ENCODE measurements at regions of chr19 and their contacts with region 1.

Region 1: GRCh38 chr19:38402967-38403861 is at the start of gene FAM98C:
- DNase-seq: peak; percentile 99
- H3K4me3 ChIP-seq: peak within 1 kb of the TSS; percentile 83
- H3K27ac ChIP-seq: peak within 1 kb of the TSS; percentile 29
- H3K4me1 ChIP-seq: peaks cover 4% of the 10 kb centered on the region
- CTCF ChIP-seq: peak; percentile 83
- total RNA-seq, gene FAM98C: 21.9 and 32.8 TPM in 2 replicates

Region 2: GRCh38 chr19:38374429-38375176 is 28.6 kb before region 1 on chr19 and contains the start of gene PSMD8:
- CTCF ChIA-PET with region 1: interaction called, 3 read pairs
- POLR2A ChIA-PET with region 1: interaction called, 5 read pairs
- intact Hi-C with region 1: loop called (anchors 2 kb)
- DNase-seq: peak; percentile 100
- H3K4me3 ChIP-seq: peak within 1 kb of the TSS; percentile 84
- H3K27ac ChIP-seq: peak within 1 kb of the TSS; percentile 54
- H3K4me1 ChIP-seq: peaks cover 21% of the 10 kb centered on the region
- CTCF ChIP-seq: peak; percentile 56
- total RNA-seq, gene PSMD8: 224 and 238 TPM in 2 replicates

Region 3: GRCh38 chr19:38387550-38388348 is 15.5 kb before region 1 on chr19 and contains the start of gene GGN:
- CTCF ChIA-PET with region 1: interaction called, 15 read pairs
- POLR2A ChIA-PET with region 1: interaction called, 10 read pairs
- intact Hi-C with region 1: no loop called
- DNase-seq: peak; percentile 92
- H3K4me3 ChIP-seq: peak within 1 kb of the TSS; percentile 62
- H3K27ac ChIP-seq: peak within 1 kb of the TSS; percentile 23
- H3K4me1 ChIP-seq: peaks cover 9% of the 10 kb centered on the region
- CTCF ChIP-seq: no peak
- total RNA-seq, gene GGN: not detected in 2 replicates

Region 4: GRCh38 chr19:38514812-38515633 is 111.8 kb after region 1 on chr19:
- CTCF ChIA-PET with region 1: interaction called, 7 read pairs
- POLR2A ChIA-PET with region 1: no interaction called
- intact Hi-C with region 1: loop called (anchors 1 kb)
- DNase-seq: peak; percentile 71
- H3K4me3 ChIP-seq: no peak overlapping the region
- H3K27ac ChIP-seq: no peak overlapping the region
- H3K4me1 ChIP-seq: no peaks in the 10 kb centered on the region
- CTCF ChIP-seq: peak; percentile 91

Region 5: GRCh38 chr19:38618590-38619360 is 215.6 kb after region 1 on chr19 and contains the start of gene EIF3K:
- CTCF ChIA-PET with region 1: interaction called, 4 read pairs
- POLR2A ChIA-PET with region 1: no interaction called
- intact Hi-C with region 1: loop called (anchors 5 kb)
- DNase-seq: peak; percentile 99
- H3K4me3 ChIP-seq: peak within 1 kb of the TSS; percentile 92
- H3K27ac ChIP-seq: peak within 1 kb of the TSS; percentile 87
- H3K4me1 ChIP-seq: peaks cover 37% of the 10 kb centered on the region
- CTCF ChIP-seq: no peak
- total RNA-seq, gene EIF3K: 321 and 325 TPM in 2 replicates

Region 6: DNA sequence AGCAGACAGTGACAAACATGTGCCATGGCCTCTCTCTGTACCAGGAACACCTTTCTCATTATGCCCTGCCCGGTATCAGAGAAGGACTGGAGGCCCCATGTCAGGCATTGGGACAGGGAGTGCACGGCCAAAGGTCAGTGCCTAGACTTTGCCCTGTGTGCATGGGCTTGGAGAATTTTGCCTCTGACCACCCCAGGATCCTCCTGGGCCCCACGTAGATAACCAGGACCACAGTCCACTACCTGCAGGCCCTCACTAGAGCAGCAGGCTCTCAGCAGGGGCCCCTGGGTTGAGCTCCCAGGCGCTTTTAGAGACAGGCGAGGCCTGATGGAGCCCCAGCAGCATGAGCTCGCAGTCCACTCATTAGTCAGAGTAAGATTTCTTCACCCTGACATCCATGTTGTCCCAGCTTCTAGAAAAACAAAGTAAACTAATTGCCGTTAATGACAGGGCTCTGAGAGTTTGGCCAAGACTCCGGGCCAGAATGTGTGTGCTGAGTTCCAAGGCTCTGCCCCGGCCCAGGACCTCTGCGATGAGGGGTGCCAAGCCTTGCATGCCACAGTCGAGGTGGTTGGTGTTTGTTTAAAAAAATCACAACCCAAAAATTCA is 298.3 kb after region 1 on chr19:
- CTCF ChIA-PET with region 1: no interaction called
- POLR2A ChIA-PET with region 1: no interaction called
- intact Hi-C with region 1: no loop called
- DNase-seq: no peak
- H3K4me3 ChIP-seq: no peak overlapping the region
- H3K27ac ChIP-seq: no peak overlapping the region
- H3K4me1 ChIP-seq: no peaks in the 10 kb centered on the region
- CTCF ChIP-seq: no peak

Region 7: DNA sequence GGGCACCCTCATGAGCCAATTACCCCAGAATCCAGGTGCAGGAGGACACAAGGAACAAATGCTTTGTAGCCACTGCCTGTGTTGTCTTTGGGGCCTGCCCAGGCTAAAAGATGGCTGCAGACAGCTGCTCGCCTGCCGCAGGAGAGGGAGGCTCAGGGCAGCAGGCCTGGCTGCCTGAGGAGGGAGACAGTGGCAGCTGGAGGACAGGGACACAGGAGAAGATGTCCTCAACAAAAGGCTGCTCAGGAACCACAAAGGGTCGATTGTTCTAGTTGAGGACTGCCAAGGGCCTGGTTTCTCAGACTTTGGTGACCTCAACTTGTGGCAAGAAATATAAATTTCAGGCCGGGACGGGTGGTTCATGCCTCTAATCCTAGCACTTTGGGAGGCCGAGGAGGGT is 488.6 kb after region 1 on chr19:
- CTCF ChIA-PET with region 1: no interaction called
- POLR2A ChIA-PET with region 1: no interaction called
- intact Hi-C with region 1: loop called (anchors 1 kb)
- DNase-seq: no peak
- H3K4me3 ChIP-seq: no peak overlapping the region
- H3K27ac ChIP-seq: no peak overlapping the region
- H3K4me1 ChIP-seq: no peaks in the 10 kb centered on the region
- CTCF ChIP-seq: no peak

Region 8: DNA sequence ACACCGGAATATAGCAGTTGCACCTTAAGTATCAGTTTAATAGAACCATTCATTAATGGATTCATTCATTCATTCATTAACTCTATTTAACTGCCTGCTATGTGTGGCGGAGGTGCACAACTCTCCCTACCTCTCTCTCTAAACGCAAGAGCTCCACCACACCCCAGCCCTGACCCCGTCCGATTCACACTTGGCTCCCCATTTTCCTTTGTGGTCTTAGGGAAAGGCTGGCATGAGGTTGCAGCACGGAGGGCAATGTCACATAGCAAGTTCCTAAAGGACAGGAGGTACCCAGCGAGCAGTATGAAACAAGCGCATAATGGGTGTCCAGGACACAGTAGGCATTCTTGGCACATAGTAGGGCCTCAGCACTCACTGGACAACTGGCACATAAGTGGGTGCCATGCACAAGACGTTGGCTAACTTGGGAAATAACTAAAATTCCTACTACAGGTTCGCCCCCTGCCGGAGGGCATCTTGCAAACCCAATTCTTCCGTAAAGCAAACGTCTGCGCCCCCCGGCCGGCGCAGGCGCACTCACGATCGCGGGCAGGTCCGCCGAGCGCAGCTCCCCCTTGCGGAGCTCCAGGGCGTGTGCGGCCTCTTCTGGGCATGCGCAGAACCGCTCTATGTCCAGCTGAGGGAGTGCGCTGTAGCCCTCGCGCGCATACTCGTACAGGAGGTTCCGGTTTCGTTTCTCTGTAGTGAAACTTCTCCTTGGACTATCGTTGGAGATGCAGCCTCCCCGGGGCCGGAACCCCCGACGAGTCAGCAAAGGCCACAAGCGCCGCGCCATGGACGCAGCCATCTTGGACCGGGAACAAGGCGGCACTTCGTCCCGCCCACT is 526.9 kb after region 1 on chr19 and contains the start of gene SARS2:
- CTCF ChIA-PET with region 1: interaction called, 7 read pairs
- POLR2A ChIA-PET with region 1: no interaction called
- intact Hi-C with region 1: loop called (anchors 5 kb)
- DNase-seq: peak; percentile 95
- H3K4me3 ChIP-seq: peak within 1 kb of the TSS; percentile 96
- H3K27ac ChIP-seq: peak within 1 kb of the TSS; percentile 71
- H3K4me1 ChIP-seq: peaks cover 31% of the 10 kb centered on the region
- CTCF ChIP-seq: peak; percentile 99
- total RNA-seq, gene SARS2: 29.5 and 37.7 TPM in 2 replicates

Measured in OCI-LY7 (cell line).